ENCODE measurements at regions of chr11 and their contacts with region 1.

Region 1: DNA sequence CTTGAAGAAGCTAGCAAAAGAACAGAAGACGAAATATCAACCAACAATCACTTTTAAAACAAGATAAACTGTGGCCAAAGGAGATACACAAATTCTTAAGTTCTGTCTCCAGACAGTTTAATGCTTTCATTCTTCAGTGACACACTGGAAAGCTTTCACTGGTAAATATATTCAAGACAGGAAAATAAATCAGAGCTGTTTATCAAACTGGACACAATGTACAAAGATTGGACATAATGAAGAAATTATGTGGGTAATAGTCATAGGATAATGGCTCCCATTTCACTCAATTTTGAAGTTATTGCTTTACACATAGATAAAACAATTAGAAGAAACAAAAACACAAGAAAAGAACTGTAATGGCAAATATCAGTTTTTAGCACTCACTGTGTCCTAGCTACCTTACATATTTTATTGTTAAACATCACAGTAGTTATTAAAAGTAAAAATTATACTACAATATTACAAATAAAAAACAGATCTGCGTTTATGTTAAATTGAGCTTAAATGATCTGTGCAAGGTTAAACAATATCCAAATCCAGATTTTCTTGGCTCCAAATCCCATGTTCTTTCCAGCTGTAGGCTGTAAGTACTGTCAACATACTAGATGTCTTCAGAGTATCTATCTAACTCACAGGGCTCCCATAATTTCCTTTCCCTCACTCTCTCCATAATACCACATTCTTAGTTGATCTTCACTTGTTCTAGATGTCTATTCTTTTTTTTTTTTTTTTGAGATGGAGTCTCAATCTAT is 38.6 kb upstream of the NOX4 start:
- DNase-seq: no peak
- H3K4me3 ChIP-seq: no peak overlapping the region
- H3K27ac ChIP-seq: no peak overlapping the region
- H3K4me1 ChIP-seq: no peaks in the 10 kb centered on the region
- H3K27me3 ChIP-seq: no peaks in the 10 kb centered on the region
- CTCF ChIP-seq: no peak
- EP300 ChIP-seq: no peak
- POLR2A ChIP-seq: no peak

Region 2: GRCh38 chr11:89660234-89660633 is 130.4 kb after region 1 on chr11:
- intact Hi-C with region 1: no loop called
- DNase-seq: no peak
- H3K4me3 ChIP-seq: no peak overlapping the region
- H3K27ac ChIP-seq: no peak overlapping the region
- H3K4me1 ChIP-seq: no peaks in the 10 kb centered on the region
- H3K27me3 ChIP-seq: no peaks in the 10 kb centered on the region
- CTCF ChIP-seq: no peak
- EP300 ChIP-seq: no peak
- POLR2A ChIP-seq: no peak

Region 3: GRCh38 chr11:91194546-91194945 is 1664.7 kb after region 1 on chr11:
- intact Hi-C with region 1: loop called in 1 of 4 experiments (anchors 5 kb)
- DNase-seq: no peak
- H3K4me3 ChIP-seq: no peak overlapping the region
- H3K27ac ChIP-seq: no peak overlapping the region
- H3K4me1 ChIP-seq: no peaks in the 10 kb centered on the region
- H3K27me3 ChIP-seq: no peaks in the 10 kb centered on the region
- CTCF ChIP-seq: no peak
- EP300 ChIP-seq: no peak
- POLR2A ChIP-seq: no peak